WTC11 (cell line): ENCODE measurements at regions of chr5 and their contacts with region 1.

Region 1: GRCh38 chr5:140227048-140227447 is 52.1 kb downstream of the CYSTM1 start:
- DNase-seq: no peak
- ATAC-seq: peak; percentile 73
- H3K4me3 Mint-ChIP-seq: no peak overlapping the region
- H3K27ac Mint-ChIP-seq: no peak overlapping the region
- H3K4me1 Mint-ChIP-seq: no peaks in the 10 kb centered on the region
- H3K27me3 Mint-ChIP-seq: no peaks in the 10 kb centered on the region
- CTCF ChIP-seq: no peak

Region 2: DNA sequence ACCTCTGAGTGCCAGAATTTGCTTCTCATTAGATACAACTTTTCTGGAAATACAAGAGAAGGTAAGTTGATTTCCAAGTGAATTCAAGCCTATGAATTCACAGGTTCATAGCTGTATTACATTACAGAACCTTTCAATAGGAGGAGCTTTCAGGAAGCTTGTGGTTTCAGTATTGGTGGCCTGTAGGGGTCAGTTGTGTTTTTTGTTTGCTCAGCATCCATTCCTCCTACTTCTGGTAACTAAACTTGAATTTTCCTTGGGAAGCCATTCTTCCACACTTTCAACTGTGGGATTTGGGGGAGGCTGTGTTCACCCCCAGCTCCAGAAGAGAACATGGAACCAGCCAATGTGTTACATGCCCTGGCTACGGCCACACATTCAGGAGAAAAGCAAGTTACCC is 57.6 kb before region 1 on chr5:
- CTCF ChIA-PET with region 1: interaction called, 13 read pairs
- POLR2A ChIA-PET with region 1: no interaction called
- DNase-seq: no peak
- ATAC-seq: peak; percentile 74
- H3K4me3 Mint-ChIP-seq: no peak overlapping the region
- H3K27ac Mint-ChIP-seq: no peak overlapping the region
- H3K4me1 Mint-ChIP-seq: peaks cover 18% of the 10 kb centered on the region
- H3K27me3 Mint-ChIP-seq: peaks cover 19% of the 10 kb centered on the region
- CTCF ChIP-seq: no peak